GM12878 (cell line): ENCODE measurements at regions of chr11 and their contacts with region 1.

Region 1: DNA sequence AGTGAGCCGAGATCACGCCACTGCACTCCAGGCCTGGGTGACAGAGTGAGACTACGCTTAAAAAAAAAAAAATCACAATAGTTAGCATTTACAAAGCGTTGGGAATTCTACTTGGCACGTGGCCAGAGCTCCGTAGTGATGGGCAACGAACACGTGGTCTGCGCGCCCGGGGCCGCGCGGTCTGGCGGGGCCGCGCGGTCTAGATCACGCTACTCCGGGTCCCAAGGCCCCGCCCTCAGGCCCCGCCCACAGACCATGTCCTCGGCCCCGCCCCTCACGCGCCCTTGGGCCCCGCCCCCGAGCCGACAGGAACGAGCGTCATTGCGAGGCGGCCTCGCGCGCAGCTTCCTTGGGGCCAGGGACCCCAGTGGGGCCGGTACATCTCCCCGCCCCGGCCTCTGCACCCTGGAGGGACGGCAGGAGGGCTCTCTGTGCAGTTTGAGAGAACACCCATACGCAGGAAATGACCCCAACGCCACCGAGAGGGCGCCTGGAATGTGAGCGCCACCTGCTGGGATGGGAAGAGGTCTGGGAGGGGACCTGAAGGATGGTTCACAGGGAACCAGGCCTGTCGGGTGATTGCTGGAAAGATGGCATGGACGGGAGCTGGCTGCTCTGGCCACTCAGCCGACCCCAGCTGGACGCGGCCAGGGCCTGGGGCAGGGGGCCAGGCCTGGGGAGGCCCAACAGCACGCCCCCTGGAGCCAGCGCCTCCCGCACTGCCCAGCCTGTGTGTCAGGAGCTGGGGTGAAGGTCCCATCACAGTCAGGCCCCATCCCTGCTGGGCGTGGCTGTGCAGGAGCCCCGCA is 2.0 kb upstream of the PTDSS2 start:
- DNase-seq: peak; percentile 54
- ATAC-seq: peak; percentile 79
- H3K4me3 ChIP-seq: peak overlapping the region; percentile 82
- H3K27ac ChIP-seq: peak overlapping the region; percentile 84
- H3K4me1 ChIP-seq: peaks cover 15% of the 10 kb centered on the region
- H3K27me3 ChIP-seq: no peaks in the 10 kb centered on the region
- CTCF ChIP-seq: peak; percentile 83 to 87 (median 87)
- EP300 ChIP-seq: no peak
- POLR2A ChIP-seq: peak; percentile 89
- RAD21 ChIP-seq: peak; percentile 79

Region 2: GRCh38 chr11:406978-407739 is 41.0 kb before region 1 on chr11:
- CTCF ChIA-PET with region 1: interaction called, 19 read pairs
- POLR2A ChIA-PET with region 1: interaction called, 10 read pairs
- RAD21 ChIA-PET with region 1: interaction called, 17 read pairs
- SMC1A ChIA-PET with region 1: no interaction called
- in situ Hi-C with region 1: no loop called
- intact Hi-C with region 1: no loop called
- DNase-seq: peak; percentile 37
- ATAC-seq: peak; percentile 93
- H3K4me3 ChIP-seq: peak overlapping the region; percentile 44; the same call in 1 of the 2 replicates
- H3K27ac ChIP-seq: no peak overlapping the region
- H3K4me1 ChIP-seq: peaks cover 6% of the 10 kb centered on the region; the same call in 1 of the 2 replicates
- H3K27me3 ChIP-seq: no peaks in the 10 kb centered on the region
- CTCF ChIP-seq: no peak
- EP300 ChIP-seq: no peak
- POLR2A ChIP-seq: 0 out of 2 replicates have a peak, but pooled peaks have one; percentile 8
- RAD21 ChIP-seq: no peak

Region 3: DNA sequence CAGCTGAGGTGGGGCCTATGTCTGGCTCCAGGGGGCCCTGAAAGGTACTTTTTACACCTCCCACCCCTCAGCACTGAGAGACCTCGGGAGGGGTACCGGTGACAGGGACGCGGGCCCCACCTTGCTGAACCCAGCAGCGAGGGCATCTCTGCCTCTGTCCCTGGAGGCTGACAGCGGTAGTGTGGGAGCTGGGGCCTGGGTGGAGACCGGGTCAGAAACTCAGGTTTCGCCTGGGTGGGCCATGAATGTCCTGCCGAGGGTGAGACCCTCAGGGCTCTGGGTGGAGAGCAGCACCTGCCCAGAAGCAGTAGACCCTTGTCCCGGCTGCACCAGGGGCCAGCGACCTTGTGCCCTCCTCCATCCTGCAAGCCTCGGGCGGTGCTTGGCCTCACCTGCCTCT is 24.1 kb after region 1 on chr11:
- CTCF ChIA-PET with region 1: no interaction called
- POLR2A ChIA-PET with region 1: no interaction called
- RAD21 ChIA-PET with region 1: no interaction called
- SMC1A ChIA-PET with region 1: no interaction called
- in situ Hi-C with region 1: no loop called
- intact Hi-C with region 1: no loop called
- DNase-seq: no peak
- ATAC-seq: no peak
- H3K4me3 ChIP-seq: no peak overlapping the region
- H3K27ac ChIP-seq: no peak overlapping the region
- H3K4me1 ChIP-seq: no peaks in the 10 kb centered on the region
- H3K27me3 ChIP-seq: no peaks in the 10 kb centered on the region
- CTCF ChIP-seq: no peak
- EP300 ChIP-seq: no peak
- POLR2A ChIP-seq: no peak
- RAD21 ChIP-seq: no peak

Region 4: DNA sequence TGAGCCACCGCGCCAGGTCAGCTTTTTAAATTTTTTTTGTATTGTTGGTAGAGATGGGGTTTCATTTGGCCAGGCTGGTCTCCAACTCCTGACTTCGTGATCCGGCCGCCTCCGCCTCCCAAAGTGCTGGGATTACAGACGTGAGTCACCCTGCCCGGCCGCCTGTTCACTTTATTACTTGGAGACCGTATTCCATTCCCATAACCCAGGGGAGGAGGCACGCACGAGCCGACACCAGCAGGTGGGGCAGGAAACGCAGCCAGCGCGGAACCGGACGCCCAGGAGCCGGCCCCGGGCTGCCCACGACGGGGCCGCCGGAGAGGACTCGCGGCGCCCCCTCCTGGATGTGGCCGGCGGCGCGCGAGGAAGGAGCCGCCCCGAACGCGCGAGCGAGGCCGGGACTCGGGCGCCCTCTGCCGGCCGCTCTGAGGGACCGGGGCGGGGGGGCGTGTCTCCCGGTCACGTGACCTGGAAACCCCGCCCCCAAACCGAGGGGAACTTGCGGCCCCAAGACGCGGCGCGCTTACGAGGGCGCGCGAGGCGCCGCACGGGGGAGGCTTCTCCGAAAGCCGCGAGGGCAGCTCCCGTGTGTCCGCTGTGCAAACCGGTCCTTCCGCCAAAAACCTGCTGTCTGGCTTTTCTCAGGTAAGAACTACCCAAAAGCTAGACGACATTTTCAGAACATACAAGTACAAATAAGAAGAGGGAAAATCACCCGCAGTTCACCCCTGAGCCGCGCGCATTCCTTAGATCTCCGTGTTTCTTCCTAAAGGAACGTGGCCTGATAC is 70.5 kb after region 1 on chr11:
- CTCF ChIA-PET with region 1: interaction called, 11 read pairs
- POLR2A ChIA-PET with region 1: no interaction called
- RAD21 ChIA-PET with region 1: no interaction called
- SMC1A ChIA-PET with region 1: interaction called, 3 read pairs
- in situ Hi-C with region 1: no loop called
- intact Hi-C with region 1: no loop called
- DNase-seq: no peak
- ATAC-seq: peak; percentile 99
- H3K4me3 ChIP-seq: no peak overlapping the region; the same call in 1 of the 2 replicates
- H3K27ac ChIP-seq: no peak overlapping the region
- H3K4me1 ChIP-seq: peaks cover 3% of the 10 kb centered on the region; the same call in 1 of the 2 replicates
- H3K27me3 ChIP-seq: no peaks in the 10 kb centered on the region
- CTCF ChIP-seq: peak; percentile 84 to 99 (median 97); a peak in 4 of 6 replicates
- EP300 ChIP-seq: no peak
- POLR2A ChIP-seq: peak; percentile 70; the same call in 1 of the 2 replicates
- RAD21 ChIP-seq: peak; percentile 72

Region 5: GRCh38 chr11:695538-696248 is 247.6 kb after region 1 on chr11 and contains the start of gene TMEM80:
- CTCF ChIA-PET with region 1: interaction called, 12 read pairs
- POLR2A ChIA-PET with region 1: no interaction called
- RAD21 ChIA-PET with region 1: no interaction called
- SMC1A ChIA-PET with region 1: no interaction called
- in situ Hi-C with region 1: no loop called
- intact Hi-C with region 1: no loop called
- DNase-seq: peak; percentile 68
- ATAC-seq: peak; percentile 86
- H3K4me3 ChIP-seq: peak within 1 kb of the TSS; percentile 83
- H3K27ac ChIP-seq: peak within 1 kb of the TSS; percentile 96
- H3K4me1 ChIP-seq: peaks cover 24% of the 10 kb centered on the region
- H3K27me3 ChIP-seq: no peaks in the 10 kb centered on the region
- CTCF ChIP-seq: no peak
- EP300 ChIP-seq: no peak
- POLR2A ChIP-seq: peak; percentile 89
- RAD21 ChIP-seq: no peak
- polyA plus RNA-seq, gene TMEM80: 6.7 to 8.8 TPM